HEK293T (cell line): ENCODE measurements at regions of chr15 and their contacts with region 1.

Region 1: GRCh38 chr15:75453703-75454470 is 2.4 kb upstream of the SIN3A start:
- DNase-seq: peak; percentile 90

Region 2: DNA sequence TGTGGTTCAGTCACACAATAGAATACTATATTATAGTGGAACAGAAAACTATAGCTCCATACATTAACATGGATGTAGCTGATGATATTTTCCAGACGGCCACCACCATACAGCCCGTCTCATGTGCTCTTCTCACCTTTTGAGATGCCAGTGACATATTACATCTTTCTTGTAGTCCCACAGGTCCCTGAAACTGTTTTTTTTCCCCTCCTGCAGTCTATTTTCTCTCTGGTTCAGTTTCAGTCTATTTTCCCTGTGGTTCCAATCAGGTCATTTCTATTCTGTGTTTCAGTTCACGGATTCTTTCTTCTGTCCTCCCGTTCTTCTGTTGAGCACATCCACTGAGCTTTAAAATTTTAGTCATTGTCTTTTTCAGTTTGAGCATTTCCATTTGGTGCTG is 358.3 kb before region 1 on chr15:
- CTCF ChIA-PET with region 1: no interaction called
- POLR2A ChIA-PET with region 1: no interaction called
- DNase-seq: no peak

Region 3: GRCh38 chr15:75389791-75390382 is 64.0 kb before region 1 on chr15:
- CTCF ChIA-PET with region 1: no interaction called
- POLR2A ChIA-PET with region 1: interaction called, 31 read pairs
- DNase-seq: no peak

Region 4: DNA sequence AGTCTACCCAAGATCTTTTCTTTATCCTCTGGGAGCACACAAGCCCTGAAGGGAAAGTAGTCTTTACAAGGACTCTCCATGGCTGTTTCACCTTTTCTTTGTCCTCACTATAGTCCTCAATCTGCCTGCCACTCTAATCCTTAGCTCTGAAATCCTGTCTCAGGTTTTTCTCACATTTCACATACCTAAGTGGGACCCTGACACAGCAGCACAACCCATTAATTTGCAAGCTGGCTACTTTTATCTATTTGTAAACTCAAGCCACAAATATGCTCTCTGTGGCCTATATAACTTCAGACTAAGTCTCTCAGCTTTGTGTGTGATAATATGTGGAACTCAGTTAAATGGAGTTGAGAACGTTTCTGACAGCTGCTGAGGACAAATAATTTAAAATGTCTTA is 22.2 kb before region 1 on chr15:
- CTCF ChIA-PET with region 1: interaction called, 4 read pairs
- POLR2A ChIA-PET with region 1: interaction called, 19 read pairs
- DNase-seq: no peak

Region 5: GRCh38 chr15:75578948-75579920 is 125.3 kb after region 1 on chr15 and contains the start of gene PTPN9:
- CTCF ChIA-PET with region 1: interaction called, 4 read pairs
- POLR2A ChIA-PET with region 1: interaction called, 51 read pairs
- DNase-seq: peak; percentile 85

Region 6: GRCh38 chr15:75639709-75640482 is 186.0 kb after region 1 on chr15 and contains the start of gene IMP3:
- CTCF ChIA-PET with region 1: interaction called, 6 read pairs
- POLR2A ChIA-PET with region 1: interaction called, 99 read pairs
- DNase-seq: peak; percentile 96

Region 7: GRCh38 chr15:75684642-75685041 is 230.8 kb after region 1 on chr15:
- CTCF ChIA-PET with region 1: no interaction called
- POLR2A ChIA-PET with region 1: no interaction called
- DNase-seq: no peak